ENCODE measurements at regions of chr16 and their contacts with region 1.

Region 1: DNA sequence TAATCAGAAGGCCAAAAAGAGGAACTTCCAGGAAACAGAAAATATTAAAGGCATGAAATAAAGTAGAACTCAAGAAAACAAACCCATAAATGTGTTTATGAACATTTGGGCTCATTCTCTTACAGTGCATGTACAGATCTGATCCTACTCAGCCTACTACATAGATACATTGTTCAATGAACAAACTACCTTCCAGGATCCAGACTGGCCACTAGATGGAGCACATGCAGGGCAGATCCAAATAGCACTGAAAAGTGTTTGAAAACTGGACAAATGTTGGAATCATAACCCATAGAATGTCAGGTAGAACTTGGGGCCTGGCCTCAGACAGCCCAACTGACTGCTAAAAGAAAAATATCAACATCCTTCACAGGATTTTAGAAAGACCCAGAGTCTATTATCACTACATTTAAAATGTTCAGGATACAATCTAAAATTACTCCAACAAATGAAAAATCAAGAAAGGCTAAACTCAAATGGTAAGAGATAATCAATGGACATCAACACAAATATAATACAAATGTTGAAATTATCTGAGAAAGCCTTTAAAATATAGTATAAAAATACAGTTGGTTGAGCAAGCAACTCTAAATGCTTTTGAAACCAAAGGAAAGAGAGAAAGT is 122.4 kb upstream of the NUDT7 start:
- DNase-seq: peak; percentile 22 to 35 (median 24)
- ATAC-seq: peak; percentile 78
- H3K4me3 ChIP-seq: no peak overlapping the region
- H3K27ac ChIP-seq: no peak overlapping the region
- H3K4me1 ChIP-seq: no peaks in the 10 kb centered on the region
- H3K27me3 ChIP-seq: no peaks in the 10 kb centered on the region
- CTCF ChIP-seq: peak; percentile 46 to 68 (median 63); a peak in 5 of 6 replicates
- EP300 ChIP-seq: no peak
- POLR2A ChIP-seq: no peak
- RAD21 ChIP-seq: peak in 1 of 2 experiments; percentile 58; a peak in 2 of 4 replicates

Region 2: DNA sequence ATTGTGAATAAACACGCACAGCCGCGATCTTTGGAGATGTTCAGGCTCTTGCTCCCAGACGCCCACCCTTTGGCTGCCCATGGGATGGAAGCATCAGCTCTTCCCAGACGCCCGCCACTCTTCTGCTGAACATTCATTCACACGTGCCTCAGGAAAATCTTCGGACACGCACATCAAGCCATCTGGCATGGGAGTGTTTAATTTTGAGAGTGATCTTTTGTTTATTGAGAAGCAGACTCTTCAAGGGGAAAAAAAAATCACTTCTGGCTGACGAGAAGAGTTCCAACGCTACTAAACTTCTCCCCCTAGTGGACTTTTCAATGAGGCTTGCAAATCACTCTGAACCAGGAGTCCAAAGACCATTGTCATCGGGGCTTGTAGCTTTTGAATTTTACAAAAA is 60.4 kb after region 1 on chr16:
- CTCF ChIA-PET with region 1: interaction called, 3 read pairs
- POLR2A ChIA-PET with region 1: no interaction called
- in situ Hi-C with region 1: no loop called
- intact Hi-C with region 1: loop called (anchors 5 kb)
- DNase-seq: peak; percentile 9 to 18 (median 14)
- ATAC-seq: 0 out of 3 replicates have a peak, but pooled peaks have one; percentile 47
- H3K4me3 ChIP-seq: no peak overlapping the region
- H3K27ac ChIP-seq: no peak overlapping the region
- H3K4me1 ChIP-seq: no peaks in the 10 kb centered on the region; a peak in 1 of 5 replicates
- H3K27me3 ChIP-seq: no peaks in the 10 kb centered on the region; a peak in 2 of 5 replicates
- CTCF ChIP-seq: peak; percentile 37 to 51 (median 39); a peak in 4 of 6 replicates
- EP300 ChIP-seq: no peak
- POLR2A ChIP-seq: no peak
- RAD21 ChIP-seq: peak; percentile 27 to 38; a peak in 3 of 4 replicates

Measured in K562 (cell line).